IMR-90 (cell line): ENCODE measurements at regions of chr4 and their contacts with region 1.

Region 1: GRCh38 chr4:176383273-176384077 is 63.7 kb downstream of the SPCS3 start:
- DNase-seq: peak; percentile 81
- ATAC-seq: no peak
- H3K4me3 ChIP-seq: no peak overlapping the region
- H3K27ac ChIP-seq: no peak overlapping the region
- H3K4me1 ChIP-seq: peaks cover 2% of the 10 kb centered on the region
- H3K27me3 ChIP-seq: no peaks in the 10 kb centered on the region
- CTCF ChIP-seq: no peak
- POLR2A ChIP-seq: no peak
- RAD21 ChIP-seq: no peak; the same call in 1 of the 2 replicates

Region 2: GRCh38 chr4:176671532-176671931 is 288.1 kb after region 1 on chr4:
- CTCF ChIA-PET with region 1: no interaction called
- POLR2A ChIA-PET with region 1: no interaction called
- dilution Hi-C with region 1: no loop called
- in situ Hi-C with region 1: loop called (anchors 25 kb)
- intact Hi-C with region 1: loop called (anchors 5 kb)
- DNase-seq: peak; percentile 44
- ATAC-seq: peak; percentile 51
- H3K4me3 ChIP-seq: no peak overlapping the region
- H3K27ac ChIP-seq: 0 out of 2 replicates have a peak overlapping the region, but pooled peaks have one; percentile 29
- H3K4me1 ChIP-seq: no peaks in the 10 kb centered on the region
- H3K27me3 ChIP-seq: no peaks in the 10 kb centered on the region
- CTCF ChIP-seq: no peak
- POLR2A ChIP-seq: no peak
- RAD21 ChIP-seq: no peak

Region 3: GRCh38 chr4:177235026-177235425 is 851.6 kb after region 1 on chr4:
- CTCF ChIA-PET with region 1: no interaction called
- POLR2A ChIA-PET with region 1: no interaction called
- dilution Hi-C with region 1: no loop called
- in situ Hi-C with region 1: loop called (anchors 10 kb)
- intact Hi-C with region 1: no loop called
- DNase-seq: peak; percentile 82
- ATAC-seq: peak; percentile 24; the same call in 1 of the 2 replicates
- H3K4me3 ChIP-seq: no peak overlapping the region
- H3K27ac ChIP-seq: no peak overlapping the region
- H3K4me1 ChIP-seq: peaks cover 5% of the 10 kb centered on the region
- H3K27me3 ChIP-seq: no peaks in the 10 kb centered on the region
- CTCF ChIP-seq: no peak
- POLR2A ChIP-seq: no peak
- RAD21 ChIP-seq: no peak